MCF 10A (cell line): ENCODE measurements at regions of chr12 and their contacts with region 1.

Region 1: GRCh38 chr12:41277116-41277945 is 89.2 kb downstream of the PDZRN4 start:
- DNase-seq: peak; percentile 52
- H3K4me3 Mint-ChIP-seq: no peak overlapping the region
- H3K27ac Mint-ChIP-seq: no peak overlapping the region
- H3K4me1 Mint-ChIP-seq: no peaks in the 10 kb centered on the region
- H3K27me3 Mint-ChIP-seq: peaks cover 35% of the 10 kb centered on the region
- CTCF ChIP-seq: peak; percentile 57

Region 2: DNA sequence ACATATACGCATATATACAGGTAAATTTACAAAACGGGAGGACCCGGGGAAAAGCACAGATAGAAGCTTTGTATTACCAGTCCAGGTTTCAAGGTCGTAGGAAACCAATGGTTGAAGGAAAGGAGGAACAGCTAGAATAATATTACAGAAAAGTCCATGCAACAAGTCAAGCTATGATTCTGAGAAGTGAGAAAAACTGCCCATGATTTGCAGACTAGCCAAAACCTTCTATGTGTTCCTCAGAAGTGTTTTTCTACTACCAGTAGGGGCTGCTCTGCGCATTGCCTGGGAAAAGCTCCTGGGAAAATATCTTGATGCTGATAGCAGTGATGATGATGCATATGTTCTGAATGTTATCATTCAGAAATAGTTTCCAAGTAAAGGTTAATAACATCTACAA is 87.0 kb before region 1 on chr12:
- CTCF ChIA-PET with region 1: no interaction called
- POLR2A ChIA-PET with region 1: no interaction called
- intact Hi-C with region 1: no loop called
- DNase-seq: peak; percentile 6
- H3K4me3 Mint-ChIP-seq: no peak overlapping the region
- H3K27ac Mint-ChIP-seq: no peak overlapping the region
- H3K4me1 Mint-ChIP-seq: no peaks in the 10 kb centered on the region
- H3K27me3 Mint-ChIP-seq: peaks cover 39% of the 10 kb centered on the region
- CTCF ChIP-seq: no peak

Region 3: GRCh38 chr12:41264281-41264680 is 13.1 kb before region 1 on chr12:
- CTCF ChIA-PET with region 1: interaction called, 17 read pairs
- POLR2A ChIA-PET with region 1: no interaction called
- intact Hi-C with region 1: no loop called
- DNase-seq: no peak
- H3K4me3 Mint-ChIP-seq: no peak overlapping the region
- H3K27ac Mint-ChIP-seq: no peak overlapping the region
- H3K4me1 Mint-ChIP-seq: no peaks in the 10 kb centered on the region
- H3K27me3 Mint-ChIP-seq: peaks cover 66% of the 10 kb centered on the region
- CTCF ChIP-seq: peak; percentile 32

Region 4: GRCh38 chr12:41564816-41565215 is 287.5 kb after region 1 on chr12:
- CTCF ChIA-PET with region 1: no interaction called
- POLR2A ChIA-PET with region 1: no interaction called
- intact Hi-C with region 1: loop called (anchors 5 kb)
- DNase-seq: no peak
- H3K4me3 Mint-ChIP-seq: no peak overlapping the region
- H3K27ac Mint-ChIP-seq: no peak overlapping the region
- H3K4me1 Mint-ChIP-seq: no peaks in the 10 kb centered on the region
- H3K27me3 Mint-ChIP-seq: peaks cover 39% of the 10 kb centered on the region
- CTCF ChIP-seq: no peak

Region 5: DNA sequence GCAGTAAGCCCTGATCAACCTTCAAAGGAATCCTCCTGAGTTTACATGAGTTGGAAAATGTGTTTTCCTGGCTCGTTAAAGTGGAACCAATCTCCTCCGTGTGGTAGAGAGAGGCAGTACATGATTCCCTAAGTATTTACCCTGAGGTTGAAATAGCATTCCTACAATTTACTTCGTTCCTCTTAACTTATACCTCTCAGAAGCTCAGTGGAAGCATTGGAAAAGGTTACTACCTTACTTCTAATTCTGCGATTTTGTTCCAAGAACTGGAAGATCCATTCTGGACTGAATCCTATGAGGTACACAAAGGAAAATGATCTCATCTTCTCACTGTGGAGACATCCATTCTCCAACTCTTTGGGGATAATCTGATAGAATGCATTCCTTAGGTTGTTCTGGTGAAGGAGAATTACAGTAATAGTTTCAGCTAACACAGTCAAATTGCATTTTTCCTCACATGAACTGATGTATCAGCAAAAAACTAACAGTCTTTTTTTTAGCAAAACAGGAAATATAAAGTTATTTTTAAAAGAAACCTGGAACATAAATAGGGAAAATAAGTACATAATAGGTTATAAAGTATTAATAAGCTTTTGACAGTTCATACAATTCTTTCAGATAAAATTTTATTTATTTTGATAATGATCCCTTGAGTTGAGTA is 386.4 kb after region 1 on chr12:
- CTCF ChIA-PET with region 1: interaction called, 19 read pairs
- POLR2A ChIA-PET with region 1: no interaction called
- intact Hi-C with region 1: loop called (anchors 2 kb)
- DNase-seq: peak; percentile 24
- H3K4me3 Mint-ChIP-seq: no peak overlapping the region
- H3K27ac Mint-ChIP-seq: no peak overlapping the region
- H3K4me1 Mint-ChIP-seq: no peaks in the 10 kb centered on the region
- H3K27me3 Mint-ChIP-seq: no peaks in the 10 kb centered on the region
- CTCF ChIP-seq: peak; percentile 26

Region 6: DNA sequence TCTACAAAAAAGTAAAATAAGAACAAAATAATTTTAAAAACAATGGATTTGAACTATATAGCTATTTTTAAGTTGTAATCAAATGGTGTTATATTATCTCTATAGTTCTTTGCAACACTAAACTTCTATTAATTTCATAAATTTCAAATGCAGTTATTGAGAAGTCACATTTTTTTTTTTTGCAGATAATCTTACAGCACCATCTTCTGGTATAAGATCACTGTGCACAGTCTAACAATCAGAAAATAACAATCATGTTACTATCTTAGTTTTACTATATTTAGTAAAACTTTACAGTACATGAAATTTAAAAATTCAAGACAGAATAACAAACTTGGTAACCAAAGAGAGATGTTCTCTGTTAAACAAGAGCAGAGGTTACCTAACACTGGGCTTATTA is 826.8 kb after region 1 on chr12:
- CTCF ChIA-PET with region 1: interaction called, 7 read pairs
- POLR2A ChIA-PET with region 1: no interaction called
- intact Hi-C with region 1: loop called (anchors 1 kb)
- DNase-seq: no peak
- H3K4me3 Mint-ChIP-seq: no peak overlapping the region
- H3K27ac Mint-ChIP-seq: no peak overlapping the region
- H3K4me1 Mint-ChIP-seq: no peaks in the 10 kb centered on the region
- H3K27me3 Mint-ChIP-seq: no peaks in the 10 kb centered on the region
- CTCF ChIP-seq: peak; percentile 30

Region 7: GRCh38 chr12:42568952-42569915 is 1291.9 kb after region 1 on chr12:
- CTCF ChIA-PET with region 1: no interaction called
- POLR2A ChIA-PET with region 1: no interaction called
- intact Hi-C with region 1: loop called (anchors 5 kb)
- DNase-seq: peak; percentile 58
- H3K4me3 Mint-ChIP-seq: no peak overlapping the region
- H3K27ac Mint-ChIP-seq: no peak overlapping the region
- H3K4me1 Mint-ChIP-seq: peaks cover 6% of the 10 kb centered on the region
- H3K27me3 Mint-ChIP-seq: no peaks in the 10 kb centered on the region
- CTCF ChIP-seq: peak; percentile 57